MCF 10A (cell line): ENCODE measurements at regions of chr2 and their contacts with region 1.

Region 1: GRCh38 chr2:101419096-101419663 is 31.9 kb upstream of the CREG2 start:
- DNase-seq: peak; percentile 75
- H3K4me3 Mint-ChIP-seq: no peak overlapping the region
- H3K27ac Mint-ChIP-seq: no peak overlapping the region
- H3K4me1 Mint-ChIP-seq: peaks cover 6% of the 10 kb centered on the region
- H3K27me3 Mint-ChIP-seq: no peaks in the 10 kb centered on the region
- CTCF ChIP-seq: peak; percentile 67

Region 2: DNA sequence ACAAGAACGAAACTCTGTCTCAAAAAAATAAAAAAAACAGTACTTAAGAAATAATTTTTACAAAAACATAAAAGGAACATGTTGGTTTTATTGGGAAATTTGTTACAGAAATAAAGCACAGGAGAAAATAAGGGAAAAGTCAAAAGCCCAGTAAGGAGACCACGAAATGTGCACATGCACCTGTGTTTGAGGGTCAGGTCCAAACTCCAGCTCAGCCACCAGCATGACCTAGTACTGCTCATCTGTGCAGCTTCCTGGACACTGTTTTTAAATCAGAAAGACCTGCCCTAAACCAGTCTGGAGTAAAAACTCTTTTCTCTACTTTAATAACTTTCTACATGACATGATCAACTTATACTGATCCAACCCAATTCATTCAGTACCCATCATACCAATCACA is 131.9 kb before region 1 on chr2:
- CTCF ChIA-PET with region 1: no interaction called
- POLR2A ChIA-PET with region 1: no interaction called
- intact Hi-C with region 1: no loop called
- DNase-seq: no peak
- H3K4me3 Mint-ChIP-seq: no peak overlapping the region
- H3K27ac Mint-ChIP-seq: no peak overlapping the region
- H3K4me1 Mint-ChIP-seq: no peaks in the 10 kb centered on the region
- H3K27me3 Mint-ChIP-seq: no peaks in the 10 kb centered on the region
- CTCF ChIP-seq: no peak

Region 3: GRCh38 chr2:101341901-101342624 is 77.1 kb before region 1 on chr2:
- CTCF ChIA-PET with region 1: interaction called, 21 read pairs
- POLR2A ChIA-PET with region 1: interaction called, 5 read pairs
- intact Hi-C with region 1: loop called (anchors 1 kb)
- DNase-seq: peak; percentile 78
- H3K4me3 Mint-ChIP-seq: no peak overlapping the region
- H3K27ac Mint-ChIP-seq: no peak overlapping the region
- H3K4me1 Mint-ChIP-seq: peaks cover 5% of the 10 kb centered on the region
- H3K27me3 Mint-ChIP-seq: no peaks in the 10 kb centered on the region
- CTCF ChIP-seq: peak; percentile 78

Region 4: GRCh38 chr2:101450965-101451364 is 31.8 kb after region 1 on chr2:
- CTCF ChIA-PET with region 1: no interaction called
- POLR2A ChIA-PET with region 1: no interaction called
- intact Hi-C with region 1: no loop called
- DNase-seq: no peak
- H3K4me3 Mint-ChIP-seq: no peak overlapping the region
- H3K27ac Mint-ChIP-seq: no peak overlapping the region
- H3K4me1 Mint-ChIP-seq: peaks cover 14% of the 10 kb centered on the region
- H3K27me3 Mint-ChIP-seq: no peaks in the 10 kb centered on the region
- CTCF ChIP-seq: no peak

Region 5: DNA sequence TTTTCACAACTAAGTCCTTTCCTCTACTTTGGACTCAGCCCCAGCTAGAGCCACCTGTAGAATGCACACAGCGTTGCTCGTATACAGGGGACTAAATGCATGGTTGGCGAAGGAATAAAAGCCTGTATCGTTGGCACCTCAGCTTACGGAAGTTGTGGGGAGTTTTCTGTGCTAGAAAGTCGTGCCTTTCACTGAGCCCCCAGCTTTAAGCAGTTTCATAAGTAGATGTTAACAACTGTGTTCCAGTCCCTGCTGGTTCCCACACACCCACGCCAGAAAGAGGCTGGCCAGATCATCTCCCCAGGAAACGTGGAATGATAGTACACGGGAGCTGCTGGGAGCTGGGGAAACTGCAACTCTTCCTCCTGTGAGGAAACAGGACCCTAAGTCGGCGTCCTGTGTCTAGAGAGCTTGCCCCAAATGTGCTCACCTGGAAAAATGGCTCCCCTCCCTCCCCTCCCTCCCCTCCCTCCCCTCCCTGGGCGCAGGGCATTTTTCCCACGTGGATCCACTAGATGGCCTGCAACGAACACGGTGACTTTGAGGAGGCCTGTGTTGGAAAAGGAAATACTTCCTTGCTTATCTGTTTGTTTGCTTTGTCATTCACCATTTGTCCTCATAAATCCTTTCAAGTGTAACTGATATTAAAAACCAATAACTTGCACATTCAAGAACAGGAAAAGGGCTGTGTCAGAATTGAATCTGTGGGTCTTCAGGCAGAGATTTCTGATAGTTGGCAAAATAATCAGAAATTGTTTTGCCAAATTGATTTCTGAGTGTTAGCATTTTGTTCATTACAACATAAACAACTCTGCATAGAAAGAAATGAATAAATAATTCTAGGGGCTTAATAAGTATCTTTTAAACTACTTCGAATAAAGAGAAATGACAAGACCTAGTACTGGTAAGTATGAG is 99.7 kb after region 1 on chr2:
- CTCF ChIA-PET with region 1: interaction called, 12 read pairs
- POLR2A ChIA-PET with region 1: no interaction called
- intact Hi-C with region 1: loop called (anchors 2 kb)
- DNase-seq: peak; percentile 81
- H3K4me3 Mint-ChIP-seq: peak overlapping the region; percentile 44
- H3K27ac Mint-ChIP-seq: no peak overlapping the region
- H3K4me1 Mint-ChIP-seq: peaks cover 25% of the 10 kb centered on the region
- H3K27me3 Mint-ChIP-seq: no peaks in the 10 kb centered on the region
- CTCF ChIP-seq: peak; percentile 30

Region 6: DNA sequence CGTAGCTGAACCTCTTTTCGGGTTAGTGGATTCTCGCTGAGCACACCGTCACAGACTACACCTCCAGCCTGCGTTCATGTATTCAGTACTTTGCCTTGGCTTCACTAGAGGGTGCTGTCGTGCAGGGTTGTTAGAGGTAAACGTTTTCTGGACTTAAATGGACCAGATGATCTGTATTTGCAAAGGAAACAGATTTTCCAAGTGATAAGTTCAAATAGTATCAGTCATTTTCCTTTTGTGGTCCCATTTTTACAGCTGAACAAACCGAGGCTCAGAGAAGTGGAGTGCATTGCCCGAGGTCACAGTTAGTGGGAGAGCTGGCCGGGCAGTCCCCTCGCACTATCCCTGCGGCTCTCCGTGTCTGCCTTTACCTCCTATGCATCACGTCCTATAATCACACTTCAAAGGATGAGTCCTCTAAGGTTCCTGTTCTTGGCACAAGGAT is 404.2 kb after region 1 on chr2:
- CTCF ChIA-PET with region 1: interaction called, 11 read pairs
- POLR2A ChIA-PET with region 1: interaction called, 5 read pairs
- intact Hi-C with region 1: no loop called
- DNase-seq: peak; percentile 89
- H3K4me3 Mint-ChIP-seq: peak overlapping the region; percentile 51
- H3K27ac Mint-ChIP-seq: peak overlapping the region; percentile 43
- H3K4me1 Mint-ChIP-seq: peaks cover 67% of the 10 kb centered on the region
- H3K27me3 Mint-ChIP-seq: no peaks in the 10 kb centered on the region
- CTCF ChIP-seq: peak; percentile 61

Region 7: DNA sequence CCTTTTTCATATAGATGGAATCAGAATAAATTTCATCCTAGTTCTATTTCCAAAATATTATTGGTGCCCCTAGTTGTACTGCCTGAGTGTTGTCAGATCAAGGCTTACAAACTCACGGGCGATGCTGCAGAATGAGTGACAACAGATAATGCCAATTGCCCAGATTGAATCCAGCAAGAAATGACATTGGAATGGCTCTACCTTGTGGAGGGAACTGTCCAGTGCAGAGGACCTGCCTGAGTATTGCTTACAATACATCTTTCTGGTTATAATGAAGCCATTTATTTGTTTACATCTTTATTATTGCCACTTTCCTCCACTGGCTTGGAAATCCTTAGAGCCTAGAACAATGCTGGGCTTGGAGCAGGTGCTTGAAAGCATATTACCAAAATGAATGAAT is 564.7 kb after region 1 on chr2:
- CTCF ChIA-PET with region 1: no interaction called
- POLR2A ChIA-PET with region 1: no interaction called
- intact Hi-C with region 1: loop called (anchors 5 kb)
- DNase-seq: peak; percentile 60
- H3K4me3 Mint-ChIP-seq: no peak overlapping the region
- H3K27ac Mint-ChIP-seq: no peak overlapping the region
- H3K4me1 Mint-ChIP-seq: peaks cover 42% of the 10 kb centered on the region
- H3K27me3 Mint-ChIP-seq: no peaks in the 10 kb centered on the region
- CTCF ChIP-seq: peak; percentile 33